ENCODE measurements at regions of chr3 and their contacts with region 1.

Region 1: GRCh38 chr3:120198305-120198878 is 86.6 kb downstream of the GPR156 start:
- DNase-seq: no peak
- H3K4me3 ChIP-seq: no peak overlapping the region
- H3K27ac ChIP-seq: no peak overlapping the region
- H3K4me1 ChIP-seq: no peaks in the 10 kb centered on the region
- H3K27me3 ChIP-seq: no peaks in the 10 kb centered on the region
- CTCF ChIP-seq: no peak
- EP300 ChIP-seq: no peak
- POLR2A ChIP-seq: no peak

Region 2: GRCh38 chr3:118987477-118987876 is 1210.9 kb before region 1 on chr3:
- intact Hi-C with region 1: no loop called
- DNase-seq: peak; percentile 83 to 91 (median 87)
- H3K4me3 ChIP-seq: no peak overlapping the region
- H3K27ac ChIP-seq: peak overlapping the region in 1 of 2 donors; percentile 32
- H3K4me1 ChIP-seq: peaks cover 18% of the 10 kb centered on the region
- H3K27me3 ChIP-seq: no peaks in the 10 kb centered on the region
- CTCF ChIP-seq: no peak
- EP300 ChIP-seq: no peak
- POLR2A ChIP-seq: no peak

Region 3: DNA sequence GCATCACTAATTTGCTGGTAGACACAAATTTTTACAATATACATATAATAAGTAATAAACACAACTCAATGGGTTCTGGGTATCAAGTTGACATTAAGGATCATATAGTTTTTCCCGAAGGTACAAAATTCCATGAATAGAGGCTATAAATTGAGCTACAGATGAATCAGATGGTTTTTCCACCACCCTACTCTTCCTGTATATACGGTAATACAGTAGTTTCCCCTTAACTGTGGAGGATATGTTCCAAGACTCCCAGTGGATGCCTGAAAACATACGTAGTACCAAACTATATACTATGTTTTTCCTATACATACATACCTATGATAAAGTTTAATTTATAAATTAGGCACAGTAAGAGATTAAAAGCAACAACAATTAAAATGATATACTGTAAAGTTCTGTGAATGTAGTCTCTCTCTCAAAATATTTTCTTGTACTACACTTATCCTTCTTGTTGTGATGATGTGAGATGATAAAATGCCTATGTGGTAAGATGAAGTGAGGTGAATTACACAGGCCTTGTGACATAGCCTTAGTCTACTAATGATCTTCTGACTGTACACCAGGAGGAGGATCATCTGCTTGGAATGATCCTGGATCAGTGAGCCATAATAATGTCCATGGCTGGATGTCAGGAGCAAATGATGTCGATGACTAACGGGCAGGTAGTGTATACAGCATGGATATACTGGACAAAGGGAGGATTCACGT is 299.8 kb before region 1 on chr3:
- intact Hi-C with region 1: loop called in 1 of 4 experiments (anchors 10 kb)
- DNase-seq: no peak
- H3K4me3 ChIP-seq: no peak overlapping the region
- H3K27ac ChIP-seq: no peak overlapping the region
- H3K4me1 ChIP-seq: no peaks in the 10 kb centered on the region
- H3K27me3 ChIP-seq: no peaks in the 10 kb centered on the region
- CTCF ChIP-seq: no peak
- EP300 ChIP-seq: no peak
- POLR2A ChIP-seq: no peak

Region 4: GRCh38 chr3:120369000-120369399 is 170.6 kb after region 1 on chr3:
- intact Hi-C with region 1: no loop called
- DNase-seq: no peak
- H3K4me3 ChIP-seq: no peak overlapping the region
- H3K27ac ChIP-seq: no peak overlapping the region
- H3K4me1 ChIP-seq: no peaks in the 10 kb centered on the region
- H3K27me3 ChIP-seq: no peaks in the 10 kb centered on the region
- CTCF ChIP-seq: no peak
- EP300 ChIP-seq: no peak
- POLR2A ChIP-seq: no peak